ENCODE measurements at regions of chr12 and their contacts with region 1.

Region 1: DNA sequence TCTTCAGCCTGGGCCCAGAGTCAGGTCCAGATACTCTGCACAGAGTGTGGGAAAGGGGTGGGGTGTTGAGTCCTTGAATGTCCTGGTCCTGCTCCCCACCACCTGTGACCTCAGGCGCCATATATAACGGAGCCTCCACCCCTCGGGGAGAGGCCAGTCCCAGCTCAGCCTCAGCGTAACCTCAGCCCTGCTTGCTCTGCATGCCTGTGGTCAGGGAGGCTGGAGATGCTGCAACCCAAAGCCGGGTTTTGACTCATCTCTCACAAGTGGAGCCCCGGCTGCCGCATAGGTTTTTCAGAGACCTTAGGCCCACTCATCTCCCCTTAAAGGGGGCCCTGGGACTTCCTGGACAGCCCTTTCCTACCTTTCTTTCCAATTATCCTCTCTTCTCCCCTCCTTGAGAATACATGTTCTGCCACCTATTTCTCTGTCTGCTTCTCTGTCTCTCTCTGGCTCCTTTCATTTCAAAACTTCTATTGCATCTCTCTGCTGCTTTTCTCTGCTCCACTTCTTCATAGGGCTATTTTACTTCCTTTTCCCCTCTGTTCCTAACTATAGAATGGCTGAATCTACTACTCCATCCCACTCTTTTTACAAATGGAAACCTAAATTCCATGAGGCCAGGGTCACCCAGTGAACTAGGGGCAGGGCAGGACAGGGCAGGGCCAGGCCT is 1.2 kb downstream of the ITGB7 start:
- DNase-seq: peak; percentile 88
- H3K4me3 Mint-ChIP-seq: peak overlapping the region; percentile 65
- H3K27ac Mint-ChIP-seq: peak overlapping the region; percentile 79
- H3K4me1 Mint-ChIP-seq: peaks cover 75% of the 10 kb centered on the region
- H3K27me3 Mint-ChIP-seq: no peaks in the 10 kb centered on the region

Region 2: GRCh38 chr12:53190108-53190729 is 15.7 kb before region 1 on chr12:
- CTCF ChIA-PET with region 1: interaction called, 65 read pairs
- intact Hi-C with region 1: no loop called
- DNase-seq: peak; percentile 61
- H3K4me3 Mint-ChIP-seq: no peak overlapping the region
- H3K27ac Mint-ChIP-seq: peak overlapping the region; percentile 32
- H3K4me1 Mint-ChIP-seq: peaks cover 13% of the 10 kb centered on the region
- H3K27me3 Mint-ChIP-seq: no peaks in the 10 kb centered on the region

Region 3: DNA sequence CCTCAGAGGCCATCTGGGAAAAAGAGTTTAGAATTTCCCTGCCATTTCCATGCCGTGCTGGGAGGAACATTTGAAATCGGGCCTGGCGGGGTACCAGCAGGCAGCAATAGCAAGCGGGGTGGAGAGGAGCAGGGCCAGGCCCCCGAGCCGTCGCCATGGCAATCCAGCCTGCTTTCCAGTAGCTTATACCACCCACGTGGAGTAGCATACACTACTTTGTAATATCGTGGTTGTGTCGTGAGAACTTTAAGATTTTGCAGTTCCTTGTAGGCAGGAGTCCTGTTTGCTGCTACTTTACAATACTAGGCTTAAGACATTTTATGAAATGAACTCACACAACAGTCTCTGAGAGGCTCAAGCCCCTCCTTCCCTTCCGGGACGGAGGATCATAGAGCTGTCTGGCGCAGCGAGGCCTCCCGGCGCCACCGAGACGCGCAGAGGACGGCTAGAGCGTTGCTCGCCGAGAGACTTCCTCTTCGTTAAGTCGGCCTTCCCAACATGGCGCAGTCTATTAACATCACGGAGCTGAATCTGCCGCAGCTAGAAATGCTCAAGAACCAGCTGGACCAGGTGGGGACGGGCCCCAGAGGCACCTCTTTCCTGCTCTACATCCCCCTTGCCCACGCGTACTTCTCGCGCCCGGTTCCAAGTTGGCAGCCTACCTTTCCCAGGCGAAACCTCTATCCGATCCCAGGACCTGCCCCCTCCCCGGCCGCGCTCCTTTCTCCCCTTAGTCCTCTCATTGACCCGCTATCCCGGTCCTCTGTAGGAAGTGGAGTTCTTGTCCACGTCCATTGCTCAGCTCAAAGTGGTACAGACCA is 89.4 kb after region 1 on chr12 and contains the start of gene PFDN5:
- CTCF ChIA-PET with region 1: interaction called, 154 read pairs
- intact Hi-C with region 1: loop called (anchors 2 kb)
- DNase-seq: peak; percentile 94
- H3K4me3 Mint-ChIP-seq: peak within 1 kb of the TSS; percentile 98
- H3K27ac Mint-ChIP-seq: peak within 1 kb of the TSS; percentile 95
- H3K4me1 Mint-ChIP-seq: peaks cover 53% of the 10 kb centered on the region
- H3K27me3 Mint-ChIP-seq: no peaks in the 10 kb centered on the region
- total RNA-seq, gene PFDN5: 376 to 383 TPM

Region 4: GRCh38 chr12:53414756-53415417 is 209.0 kb after region 1 on chr12:
- CTCF ChIA-PET with region 1: no interaction called
- intact Hi-C with region 1: loop called (anchors 10 kb)
- DNase-seq: no peak
- H3K4me3 Mint-ChIP-seq: no peak overlapping the region
- H3K27ac Mint-ChIP-seq: no peak overlapping the region
- H3K4me1 Mint-ChIP-seq: peaks cover 74% of the 10 kb centered on the region
- H3K27me3 Mint-ChIP-seq: no peaks in the 10 kb centered on the region

Measured in activated naive CD4-positive, alpha-beta T cell treated with anti-CD3 and anti-CD28 coated beads for 36 hours (primary cell).